ENCODE measurements at regions of chr16 and their contacts with region 1.

Region 1: GRCh38 chr16:76583466-76583865 is 306.3 kb downstream of the CNTNAP4 start:
- DNase-seq: no peak
- H3K4me3 ChIP-seq: no peak overlapping the region
- H3K27ac ChIP-seq: no peak overlapping the region
- H3K4me1 ChIP-seq: no peaks in the 10 kb centered on the region
- H3K27me3 ChIP-seq: no peaks in the 10 kb centered on the region
- CTCF ChIP-seq: no peak

Region 2: GRCh38 chr16:76622876-76623275 is 39.4 kb after region 1 on chr16:
- CTCF ChIA-PET with region 1: no interaction called
- dilution Hi-C with region 1: loop called (anchors 5 kb)
- in situ Hi-C with region 1: no loop called
- intact Hi-C with region 1: no loop called
- DNase-seq: no peak
- H3K4me3 ChIP-seq: no peak overlapping the region
- H3K27ac ChIP-seq: no peak overlapping the region
- H3K4me1 ChIP-seq: no peaks in the 10 kb centered on the region
- H3K27me3 ChIP-seq: peaks cover 3% of the 10 kb centered on the region
- CTCF ChIP-seq: no peak

Measured in mammary epithelial cell (primary cell).